Endothelial cell of umbilical vein (primary cell): ENCODE measurements at regions of chr1 and their contacts with region 1.

Region 1: GRCh38 chr1:3453203-3453761 is 1.2 kb upstream of the ARHGEF16 start:
- DNase-seq: peak; percentile 56
- H3K4me3 ChIP-seq: no peak overlapping the region
- H3K27ac ChIP-seq: no peak overlapping the region
- H3K4me1 ChIP-seq: no peaks in the 10 kb centered on the region
- H3K27me3 ChIP-seq: peaks cover 0 to 3% of the 10 kb centered on the region in 2 experiments
- CTCF ChIP-seq: peak; percentile 82 to 94
- POLR2A ChIP-seq: no peak

Region 2: GRCh38 chr1:2894381-2895041 is 558.8 kb before region 1 on chr1:
- CTCF ChIA-PET with region 1: no interaction called
- POLR2A ChIA-PET with region 1: no interaction called
- dilution Hi-C with region 1: no loop called
- intact Hi-C with region 1: no loop called
- DNase-seq: no peak
- H3K4me3 ChIP-seq: no peak overlapping the region
- H3K27ac ChIP-seq: no peak overlapping the region
- H3K4me1 ChIP-seq: no peaks in the 10 kb centered on the region
- H3K27me3 ChIP-seq: no peaks in the 10 kb centered on the region
- CTCF ChIP-seq: no peak
- POLR2A ChIP-seq: no peak

Region 3: DNA sequence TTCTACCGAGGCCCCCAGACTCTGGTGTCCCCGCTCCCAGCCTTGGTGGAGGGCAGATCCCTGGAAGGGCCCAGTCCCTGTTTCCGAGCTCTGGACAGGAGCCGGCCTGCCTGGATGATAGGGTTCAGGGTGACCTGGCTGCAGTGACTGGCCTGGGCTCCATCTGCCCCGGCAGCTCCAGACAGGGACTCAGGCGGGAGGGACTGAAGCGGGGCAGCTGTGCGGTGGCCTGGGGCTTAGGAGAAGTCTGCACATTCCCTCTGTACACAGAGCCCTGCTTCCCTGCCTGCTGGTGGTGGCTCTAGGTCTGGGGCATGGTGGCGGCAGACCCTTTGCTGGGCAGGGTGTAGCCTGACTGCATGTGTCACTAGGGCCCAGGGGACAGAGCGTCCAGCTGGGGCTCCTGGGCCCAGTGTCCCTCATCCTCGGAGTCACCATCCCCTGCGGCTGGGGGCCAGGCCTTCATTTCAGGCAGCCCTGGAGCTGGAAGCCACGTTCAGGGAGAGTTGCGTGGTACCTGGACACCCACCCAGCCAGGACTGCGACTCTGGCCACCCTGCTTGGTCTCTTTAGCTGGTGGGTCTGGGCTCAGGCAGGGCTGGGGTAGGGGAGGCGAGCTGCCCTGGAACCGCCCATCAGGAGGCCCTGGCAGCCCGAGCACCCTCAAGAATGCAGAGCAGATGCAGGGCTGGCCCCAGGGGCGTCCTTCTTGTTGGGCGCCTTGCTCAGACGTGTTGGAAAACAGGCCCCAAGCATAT is 10.8 kb after region 1 on chr1:
- CTCF ChIA-PET with region 1: interaction called, 17 read pairs
- POLR2A ChIA-PET with region 1: no interaction called
- dilution Hi-C with region 1: no loop called
- intact Hi-C with region 1: no loop called
- DNase-seq: no peak
- H3K4me3 ChIP-seq: no peak overlapping the region
- H3K27ac ChIP-seq: no peak overlapping the region
- H3K4me1 ChIP-seq: no peaks in the 10 kb centered on the region
- H3K27me3 ChIP-seq: no peaks in the 10 kb centered on the region
- CTCF ChIP-seq: no peak
- POLR2A ChIP-seq: no peak

Region 4: DNA sequence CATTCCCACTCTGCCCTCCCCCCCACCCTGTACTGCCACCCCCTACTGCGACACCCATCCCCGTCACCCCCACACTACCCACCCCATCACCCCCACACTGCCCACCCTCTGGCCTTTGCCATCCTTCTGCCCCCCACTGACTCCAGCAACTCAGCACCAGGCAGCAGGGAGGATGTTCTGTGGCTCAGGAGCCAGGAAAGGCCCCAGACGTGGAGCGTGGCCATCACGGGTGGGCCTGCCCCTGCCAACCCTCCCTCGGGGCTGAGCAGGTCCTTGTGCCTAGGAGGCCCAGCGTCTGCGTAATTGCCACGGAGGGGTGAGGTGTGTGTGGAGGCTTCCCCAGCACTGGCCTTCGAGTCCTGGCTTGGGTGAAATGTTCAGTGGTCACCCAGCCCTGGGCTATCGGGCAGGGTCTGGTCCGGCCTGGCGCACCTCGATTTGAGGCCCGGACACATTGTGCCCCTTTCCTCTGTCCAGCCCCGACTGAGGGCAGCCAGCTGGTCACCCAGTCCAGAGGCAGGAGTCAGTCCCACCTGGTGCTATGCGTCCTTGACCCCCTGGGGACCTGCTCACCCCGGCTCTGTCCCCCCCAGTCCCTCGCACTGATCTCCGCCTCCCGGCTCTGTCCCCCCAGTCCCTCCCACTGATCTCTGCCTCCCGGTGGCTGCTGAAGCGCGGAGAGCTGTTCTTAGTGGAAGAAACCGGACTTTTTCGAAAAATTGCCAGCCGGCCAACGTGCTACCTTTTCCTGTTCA is 24.1 kb after region 1 on chr1:
- CTCF ChIA-PET with region 1: interaction called, 82 read pairs
- POLR2A ChIA-PET with region 1: no interaction called
- dilution Hi-C with region 1: no loop called
- intact Hi-C with region 1: no loop called
- DNase-seq: no peak
- H3K4me3 ChIP-seq: no peak overlapping the region
- H3K27ac ChIP-seq: no peak overlapping the region
- H3K4me1 ChIP-seq: no peaks in the 10 kb centered on the region
- H3K27me3 ChIP-seq: no peaks in the 10 kb centered on the region
- CTCF ChIP-seq: no peak
- POLR2A ChIP-seq: no peak

Region 5: GRCh38 chr1:3491291-3492246 is 38.3 kb after region 1 on chr1:
- CTCF ChIA-PET with region 1: interaction called, 57 read pairs
- POLR2A ChIA-PET with region 1: no interaction called
- dilution Hi-C with region 1: no loop called
- intact Hi-C with region 1: no loop called
- DNase-seq: peak; percentile 62
- H3K4me3 ChIP-seq: no peak overlapping the region
- H3K27ac ChIP-seq: no peak overlapping the region
- H3K4me1 ChIP-seq: no peaks in the 10 kb centered on the region
- H3K27me3 ChIP-seq: no peaks in the 10 kb centered on the region
- CTCF ChIP-seq: peak; percentile 88 to 98
- POLR2A ChIP-seq: no peak

Region 6: DNA sequence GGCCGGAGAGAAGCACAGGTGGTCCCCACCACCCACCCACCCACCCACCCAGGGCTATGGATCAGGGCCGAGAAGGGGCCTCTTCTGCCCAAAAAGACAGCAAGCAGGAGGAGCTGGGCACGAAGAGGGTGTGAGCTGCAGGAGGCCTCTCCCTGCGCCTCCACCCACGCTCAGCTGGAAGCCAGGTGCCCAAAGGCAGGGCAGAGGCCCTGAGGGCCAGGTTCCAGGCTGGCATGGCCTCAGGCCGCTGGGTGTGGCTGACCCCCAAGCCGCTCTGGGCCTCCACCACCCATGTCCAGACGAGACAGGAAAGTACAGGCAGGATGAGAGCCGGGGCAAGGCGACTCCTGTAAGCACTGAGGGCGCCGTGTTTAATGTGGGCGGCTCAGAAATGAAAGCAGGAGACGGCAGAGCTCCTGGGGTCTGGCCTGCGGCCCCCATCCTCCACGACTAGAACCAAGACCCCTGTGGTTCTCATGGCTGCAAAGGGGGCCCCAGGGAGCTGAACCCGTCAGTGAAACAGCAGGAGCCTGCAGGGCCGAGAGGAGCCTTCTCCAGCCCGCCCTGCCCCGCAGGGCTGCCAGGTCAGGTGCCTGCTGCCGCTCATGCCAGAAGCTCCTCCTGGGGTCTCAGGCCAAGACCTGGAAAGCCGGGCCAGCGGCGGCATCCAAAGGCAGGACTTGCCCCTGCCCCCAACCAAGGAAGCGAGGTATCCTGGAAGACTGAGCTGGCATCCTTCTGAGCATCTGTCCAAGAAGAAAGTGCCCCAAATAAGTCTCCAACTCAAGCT is 102.0 kb after region 1 on chr1:
- CTCF ChIA-PET with region 1: no interaction called
- POLR2A ChIA-PET with region 1: no interaction called
- dilution Hi-C with region 1: no loop called
- intact Hi-C with region 1: no loop called
- DNase-seq: no peak
- H3K4me3 ChIP-seq: no peak overlapping the region
- H3K27ac ChIP-seq: no peak overlapping the region
- H3K4me1 ChIP-seq: no peaks in the 10 kb centered on the region
- H3K27me3 ChIP-seq: no peaks in the 10 kb centered on the region
- CTCF ChIP-seq: no peak
- POLR2A ChIP-seq: no peak

Region 7: DNA sequence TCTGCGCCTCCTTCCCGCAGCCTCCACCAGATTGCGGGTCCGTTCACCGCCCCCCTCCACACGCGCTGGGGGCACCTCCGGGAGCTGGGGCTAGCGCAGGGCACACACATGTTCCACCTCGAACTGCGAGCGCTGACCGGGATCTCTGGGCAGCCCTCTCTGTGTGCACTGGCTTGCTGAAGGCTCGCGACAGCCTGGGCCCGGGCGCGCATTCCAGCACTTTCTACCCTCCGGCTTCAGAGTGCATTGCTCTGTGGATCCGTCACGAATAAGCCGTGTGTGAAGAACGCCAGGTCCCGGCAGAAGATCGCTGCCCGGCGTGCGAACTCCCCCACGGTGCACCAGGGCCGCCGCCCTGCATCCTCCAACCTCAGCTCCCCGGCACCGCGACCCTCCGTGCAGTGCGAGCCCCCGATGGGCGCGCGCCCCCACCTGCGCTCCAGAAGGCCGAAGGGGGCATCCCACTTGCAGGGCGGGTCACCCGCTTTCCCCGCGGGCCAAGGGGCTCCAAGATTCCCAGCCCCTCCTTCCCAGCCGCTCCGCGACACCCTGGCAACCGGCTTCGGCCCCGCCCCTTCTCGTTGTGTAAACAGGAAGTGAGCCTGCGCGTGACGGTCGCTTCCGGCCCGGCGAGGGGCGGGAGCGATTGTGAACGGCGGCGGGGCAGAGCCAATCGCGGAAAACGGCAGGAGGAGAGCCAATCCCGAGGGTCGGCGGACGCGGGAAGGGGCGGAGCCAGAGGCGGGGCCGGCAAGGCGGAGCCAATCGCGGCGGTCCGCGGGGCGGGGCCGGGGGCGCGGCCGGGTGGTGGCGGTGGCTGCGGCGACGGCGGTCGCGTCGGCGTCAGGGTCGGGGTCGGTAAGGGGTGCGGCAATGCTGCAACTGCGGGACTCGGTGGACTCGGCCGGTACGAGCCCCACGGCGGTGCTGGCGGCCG is 171.2 kb after region 1 on chr1 and contains the start of gene TPRG1L:
- CTCF ChIA-PET with region 1: interaction called, 139 read pairs
- POLR2A ChIA-PET with region 1: no interaction called
- dilution Hi-C with region 1: no loop called
- intact Hi-C with region 1: loop called (anchors 1 kb)
- DNase-seq: peak; percentile 97
- H3K4me3 ChIP-seq: peak within 1 kb of the TSS; percentile 53 to 60 (median 54)
- H3K27ac ChIP-seq: peak within 1 kb of the TSS; percentile 25
- H3K4me1 ChIP-seq: peaks cover 13% of the 10 kb centered on the region
- H3K27me3 ChIP-seq: no peaks in the 10 kb centered on the region
- CTCF ChIP-seq: no peak
- POLR2A ChIP-seq: peak; percentile 3
- total RNA-seq, gene TPRG1L: 46.2 and 53.8 TPM in 2 replicates

Region 8: DNA sequence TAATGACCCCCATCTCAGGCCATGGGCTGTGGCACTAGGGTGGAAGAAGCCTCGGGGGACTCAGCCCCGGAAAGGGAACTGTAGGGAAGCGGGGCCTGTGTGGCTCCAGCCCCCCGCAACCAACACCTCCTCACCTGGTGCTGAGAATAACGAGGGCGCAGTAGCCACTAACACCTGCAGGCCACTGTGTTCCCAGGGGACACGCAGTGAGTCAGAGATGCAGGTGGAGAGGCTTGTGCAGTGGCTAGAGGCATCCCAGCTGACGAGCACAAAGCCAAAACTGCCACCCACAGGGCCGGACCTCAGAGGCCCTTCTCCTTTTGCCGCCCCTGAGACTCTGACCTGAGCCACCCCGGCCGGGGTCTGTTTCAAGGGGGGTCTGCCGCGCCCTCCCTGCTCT is 265.5 kb after region 1 on chr1:
- CTCF ChIA-PET with region 1: interaction called, 11 read pairs
- POLR2A ChIA-PET with region 1: no interaction called
- dilution Hi-C with region 1: no loop called
- intact Hi-C with region 1: loop called (anchors 1 kb)
- DNase-seq: no peak
- H3K4me3 ChIP-seq: no peak overlapping the region
- H3K27ac ChIP-seq: no peak overlapping the region
- H3K4me1 ChIP-seq: no peaks in the 10 kb centered on the region
- H3K27me3 ChIP-seq: no peaks in the 10 kb centered on the region
- CTCF ChIP-seq: no peak
- POLR2A ChIP-seq: no peak

Region 9: GRCh38 chr1:3746830-3747521 is 293.7 kb after region 1 on chr1:
- CTCF ChIA-PET with region 1: no interaction called
- POLR2A ChIA-PET with region 1: no interaction called
- dilution Hi-C with region 1: no loop called
- intact Hi-C with region 1: no loop called
- DNase-seq: peak; percentile 77
- H3K4me3 ChIP-seq: peak overlapping the region; percentile 67 to 79 (median 74)
- H3K27ac ChIP-seq: peak overlapping the region; percentile 24
- H3K4me1 ChIP-seq: peaks cover 11% of the 10 kb centered on the region
- H3K27me3 ChIP-seq: peaks cover 0 to 7% of the 10 kb centered on the region in 2 experiments
- CTCF ChIP-seq: no peak
- POLR2A ChIP-seq: peak; percentile 85

Region 10: GRCh38 chr1:3796215-3797061 is 343.2 kb after region 1 on chr1 and contains the start of gene LRRC47:
- CTCF ChIA-PET with region 1: interaction called, 7 read pairs
- POLR2A ChIA-PET with region 1: no interaction called
- dilution Hi-C with region 1: no loop called
- intact Hi-C with region 1: loop called (anchors 5 kb)
- DNase-seq: peak; percentile 89
- H3K4me3 ChIP-seq: peak within 1 kb of the TSS; percentile 46 to 73 (median 73)
- H3K27ac ChIP-seq: peak within 1 kb of the TSS; percentile 43
- H3K4me1 ChIP-seq: peaks cover 8% of the 10 kb centered on the region
- H3K27me3 ChIP-seq: peaks cover 0 to 1% of the 10 kb centered on the region in 2 experiments
- CTCF ChIP-seq: no peak
- POLR2A ChIP-seq: peak; percentile 64
- total RNA-seq, gene LRRC47: 41.2 and 42.5 TPM in 2 replicates